MCF 10A (cell line): ENCODE measurements at regions of chr11 and their contacts with region 1.

Region 1: DNA sequence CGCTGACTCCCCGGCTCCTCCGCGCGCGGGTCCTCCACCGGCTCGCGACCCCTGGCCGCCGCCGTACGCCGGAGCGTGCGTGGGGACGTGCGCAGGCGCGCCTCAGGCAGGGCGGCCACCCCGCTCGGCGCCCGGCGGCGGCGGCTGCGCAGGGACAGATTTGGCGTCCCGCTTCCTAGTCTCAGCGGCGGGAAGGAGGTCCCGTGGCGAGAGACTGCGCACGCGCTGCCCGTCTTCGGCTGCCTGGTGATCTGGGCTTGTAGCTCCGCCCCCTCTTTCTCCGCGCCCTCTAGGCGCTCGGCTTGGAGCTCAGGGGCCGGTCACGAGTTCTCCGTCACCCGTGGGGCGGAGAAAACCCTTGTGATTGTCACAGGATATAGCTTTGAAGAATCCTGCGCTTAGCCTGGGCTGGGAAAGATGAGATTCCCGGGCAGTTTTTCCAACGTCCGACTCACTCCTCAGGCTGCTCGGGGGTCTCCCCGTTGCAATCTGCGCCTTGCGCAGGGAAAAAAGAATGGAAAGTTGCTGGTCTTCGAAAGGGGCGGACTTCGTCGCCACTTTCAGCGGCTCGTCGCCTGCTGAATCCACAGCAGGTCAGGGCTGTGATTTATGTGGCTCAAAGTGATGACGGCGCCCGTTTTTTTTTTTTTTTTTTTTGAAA is at the start of gene PATL1:
- DNase-seq: peak; percentile 98
- H3K4me3 Mint-ChIP-seq: peak within 1 kb of the TSS; percentile 95
- H3K27ac Mint-ChIP-seq: peak within 1 kb of the TSS; percentile 98
- H3K4me1 Mint-ChIP-seq: peaks cover 27% of the 10 kb centered on the region
- H3K27me3 Mint-ChIP-seq: no peaks in the 10 kb centered on the region
- CTCF ChIP-seq: no peak
- total RNA-seq, gene PATL1: 42.6 and 49.6 TPM in 2 replicates

Region 2: DNA sequence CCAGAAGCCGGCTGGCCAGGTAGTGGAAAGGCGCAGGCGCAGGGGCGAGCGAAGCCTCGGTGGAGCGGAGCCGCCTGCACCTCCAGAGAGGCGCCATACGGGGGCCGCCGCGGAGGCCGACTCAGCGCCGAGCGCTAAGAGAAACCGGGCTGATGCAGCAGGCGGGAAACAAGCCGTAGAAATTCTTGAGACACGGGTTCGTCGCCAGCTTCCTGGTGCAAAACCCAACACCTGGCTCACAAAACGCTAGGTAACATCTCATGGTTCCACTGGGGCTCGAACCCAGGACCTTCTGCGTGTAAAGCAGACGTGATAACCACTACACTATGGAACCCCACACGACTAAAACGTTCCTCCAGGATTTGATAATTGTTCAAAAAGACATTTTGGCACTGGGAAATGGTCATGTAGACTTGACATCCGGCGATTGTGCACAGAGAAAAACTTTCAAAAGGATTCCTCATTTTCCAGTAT is 118.7 kb before region 1 on chr11:
- CTCF ChIA-PET with region 1: interaction called, 5 read pairs
- POLR2A ChIA-PET with region 1: interaction called, 9 read pairs
- intact Hi-C with region 1: loop called (anchors 1 kb)
- DNase-seq: peak; percentile 93
- H3K4me3 Mint-ChIP-seq: peak overlapping the region; percentile 92
- H3K27ac Mint-ChIP-seq: peak overlapping the region; percentile 98
- H3K4me1 Mint-ChIP-seq: peaks cover 21% of the 10 kb centered on the region
- H3K27me3 Mint-ChIP-seq: no peaks in the 10 kb centered on the region
- CTCF ChIP-seq: peak; percentile 40

Region 3: GRCh38 chr11:59560702-59561469 is 108.2 kb before region 1 on chr11:
- CTCF ChIA-PET with region 1: interaction called, 3 read pairs
- POLR2A ChIA-PET with region 1: interaction called, 20 read pairs
- intact Hi-C with region 1: no loop called
- DNase-seq: peak; percentile 88
- H3K4me3 Mint-ChIP-seq: peak overlapping the region; percentile 78
- H3K27ac Mint-ChIP-seq: peak overlapping the region; percentile 99
- H3K4me1 Mint-ChIP-seq: peaks cover 13% of the 10 kb centered on the region
- H3K27me3 Mint-ChIP-seq: no peaks in the 10 kb centered on the region
- CTCF ChIP-seq: no peak

Region 4: DNA sequence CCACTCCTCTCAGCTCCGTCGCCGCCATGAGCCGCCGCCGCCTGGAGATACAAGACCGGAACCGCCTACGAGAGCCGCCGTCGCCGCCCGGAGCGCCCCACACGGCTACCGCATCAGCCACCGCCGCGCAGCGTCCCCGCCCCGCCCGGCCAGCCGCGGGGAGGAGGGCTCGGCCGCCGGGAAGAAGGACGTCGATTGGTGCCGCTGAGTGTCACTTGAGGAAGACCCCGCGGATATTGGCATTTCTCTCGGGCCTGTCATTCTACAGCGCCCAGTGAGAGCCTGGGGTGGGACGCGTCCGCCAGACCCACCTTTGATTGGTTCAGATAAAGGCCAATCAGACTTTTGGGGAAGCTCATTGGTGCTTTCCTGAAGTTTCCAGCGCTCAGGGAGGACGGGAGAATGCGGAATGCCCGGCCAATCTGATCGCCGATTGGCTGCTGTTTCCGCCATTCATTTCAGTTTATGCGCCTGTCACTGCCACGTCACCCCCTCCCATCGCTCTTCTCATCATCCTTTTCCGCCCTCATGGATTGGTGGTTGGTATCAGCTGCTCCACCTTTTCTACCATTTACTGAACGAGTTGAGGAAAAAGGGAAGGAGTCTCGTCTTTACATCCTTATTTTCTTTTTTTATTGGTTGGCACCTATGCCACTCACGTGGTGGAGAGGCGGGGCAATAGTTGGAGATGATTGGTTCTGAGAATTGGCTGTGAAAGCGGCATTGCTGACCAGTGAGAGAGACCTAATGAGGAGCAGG is 53.3 kb before region 1 on chr11 and contains the start of gene OSBP:
- CTCF ChIA-PET with region 1: no interaction called
- POLR2A ChIA-PET with region 1: interaction called, 79 read pairs
- intact Hi-C with region 1: loop called (anchors 2 kb)
- DNase-seq: peak; percentile 100
- H3K4me3 Mint-ChIP-seq: peak within 1 kb of the TSS; percentile 77
- H3K27ac Mint-ChIP-seq: peak within 1 kb of the TSS; percentile 89
- H3K4me1 Mint-ChIP-seq: peaks cover 24% of the 10 kb centered on the region
- H3K27me3 Mint-ChIP-seq: no peaks in the 10 kb centered on the region
- CTCF ChIP-seq: no peak
- total RNA-seq, gene OSBP: 73.7 and 76.1 TPM in 2 replicates

Region 5: GRCh38 chr11:59680287-59681154 is 11.4 kb after region 1 on chr11:
- CTCF ChIA-PET with region 1: interaction called, 9 read pairs
- POLR2A ChIA-PET with region 1: interaction called, 11 read pairs
- intact Hi-C with region 1: no loop called
- DNase-seq: peak; percentile 76
- H3K4me3 Mint-ChIP-seq: no peak overlapping the region
- H3K27ac Mint-ChIP-seq: no peak overlapping the region
- H3K4me1 Mint-ChIP-seq: no peaks in the 10 kb centered on the region
- H3K27me3 Mint-ChIP-seq: no peaks in the 10 kb centered on the region
- CTCF ChIP-seq: peak; percentile 84

Region 6: GRCh38 chr11:59802639-59803176 is 133.6 kb after region 1 on chr11:
- CTCF ChIA-PET with region 1: interaction called, 5 read pairs
- POLR2A ChIA-PET with region 1: interaction called, 5 read pairs
- intact Hi-C with region 1: loop called (anchors 2 kb)
- DNase-seq: peak; percentile 73
- H3K4me3 Mint-ChIP-seq: no peak overlapping the region
- H3K27ac Mint-ChIP-seq: no peak overlapping the region
- H3K4me1 Mint-ChIP-seq: no peaks in the 10 kb centered on the region
- H3K27me3 Mint-ChIP-seq: no peaks in the 10 kb centered on the region
- CTCF ChIP-seq: peak; percentile 74

Region 7: DNA sequence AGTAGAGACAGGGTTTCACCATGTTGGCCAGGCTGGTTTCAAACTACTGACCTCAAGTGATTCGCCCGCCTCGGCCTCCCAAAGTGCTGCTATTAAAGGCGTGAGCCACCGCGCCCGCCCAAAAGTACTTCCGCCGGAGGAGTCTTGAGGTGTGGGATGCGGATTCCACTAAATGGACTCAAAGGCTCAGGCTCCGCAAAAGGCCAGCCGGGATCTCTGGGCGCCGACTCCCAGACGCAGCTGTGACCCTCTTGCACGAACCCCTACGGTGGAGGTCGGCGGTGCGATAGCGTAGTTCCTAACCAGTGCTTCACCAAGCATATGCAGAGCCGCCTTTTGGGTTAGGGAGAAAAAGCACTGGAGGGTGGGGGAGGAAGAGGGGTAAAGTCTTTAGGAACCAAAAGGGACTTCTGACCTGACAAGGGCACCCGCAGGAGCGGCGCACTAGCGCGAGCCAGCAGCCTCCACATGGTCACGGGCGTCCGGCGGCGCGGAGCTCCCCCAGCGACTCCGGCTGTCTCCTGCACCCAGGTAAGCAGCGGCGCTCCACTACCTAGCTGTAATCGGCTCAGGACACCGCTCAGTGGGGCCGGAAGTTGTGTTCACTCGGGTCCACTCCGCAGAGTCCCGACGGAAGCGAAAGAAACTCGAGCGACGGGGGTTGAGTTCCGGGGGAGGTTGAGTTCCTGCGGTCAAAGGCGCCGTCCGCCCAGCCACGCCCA is 141.3 kb after region 1 on chr11 and contains the start of gene MRPL16:
- CTCF ChIA-PET with region 1: interaction called, 3 read pairs
- POLR2A ChIA-PET with region 1: interaction called, 18 read pairs
- intact Hi-C with region 1: no loop called
- DNase-seq: peak; percentile 90
- H3K4me3 Mint-ChIP-seq: peak within 1 kb of the TSS; percentile 90
- H3K27ac Mint-ChIP-seq: peak within 1 kb of the TSS; percentile 93
- H3K4me1 Mint-ChIP-seq: no peaks in the 10 kb centered on the region
- H3K27me3 Mint-ChIP-seq: no peaks in the 10 kb centered on the region
- CTCF ChIP-seq: no peak
- total RNA-seq, gene MRPL16: 31.8 and 39.8 TPM in 2 replicates